Transverse colon (tissue), 4 donors: ENCODE measurements at regions of chr1 and their contacts with region 1.

Region 1: DNA sequence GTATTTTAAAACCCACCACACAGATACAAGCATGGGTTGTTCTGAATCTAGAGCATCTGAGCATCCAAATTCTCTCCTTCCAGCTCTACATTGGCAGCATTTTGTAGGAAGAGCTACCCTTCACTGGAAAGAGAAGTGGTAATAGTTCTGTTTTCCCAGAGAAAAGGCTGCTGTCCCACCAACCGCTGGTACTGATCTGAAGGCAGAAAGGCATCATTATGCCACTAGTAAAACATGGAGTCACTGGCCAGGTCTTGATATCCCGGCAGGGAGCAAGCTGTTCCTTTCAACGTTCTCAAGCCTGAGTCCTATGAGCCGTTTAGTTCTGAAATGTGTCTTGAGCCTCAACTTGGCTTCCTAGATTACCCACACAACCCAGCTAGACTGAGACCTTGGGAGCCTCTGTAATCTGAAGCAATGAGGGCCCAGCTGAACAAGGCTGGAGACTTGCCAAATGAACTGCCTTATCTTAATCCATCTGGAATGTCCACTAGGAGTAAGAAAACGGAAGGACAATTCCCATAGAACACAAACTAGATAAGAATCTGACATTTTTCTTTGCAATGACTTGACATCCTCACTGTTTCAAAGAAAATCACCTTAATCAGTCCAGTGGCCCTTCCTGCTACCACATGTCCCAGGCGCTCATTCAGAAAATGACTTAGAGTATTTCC is 116.7 kb downstream of the KCNH1 start:
- DNase-seq: no peak
- H3K4me3 ChIP-seq: no peak overlapping the region
- H3K27ac ChIP-seq: no peak overlapping the region
- H3K4me1 ChIP-seq: no peaks in the 10 kb centered on the region
- H3K27me3 ChIP-seq: no peaks in the 10 kb centered on the region
- CTCF ChIP-seq: no peak
- EP300 ChIP-seq: no peak
- POLR2A ChIP-seq: no peak

Region 2: GRCh38 chr1:209635850-209636249 is 1381.4 kb before region 1 on chr1:
- in situ Hi-C with region 1: no loop called
- intact Hi-C with region 1: loop called (anchors 5 kb)
- DNase-seq: no peak
- H3K4me3 ChIP-seq: no peak overlapping the region
- H3K27ac ChIP-seq: no peak overlapping the region
- H3K4me1 ChIP-seq: peaks cover 0 to 3% (median 0%) of the 10 kb centered on the region in 4 donors
- H3K27me3 ChIP-seq: no peaks in the 10 kb centered on the region
- CTCF ChIP-seq: no peak
- EP300 ChIP-seq: no peak
- POLR2A ChIP-seq: no peak

Region 3: DNA sequence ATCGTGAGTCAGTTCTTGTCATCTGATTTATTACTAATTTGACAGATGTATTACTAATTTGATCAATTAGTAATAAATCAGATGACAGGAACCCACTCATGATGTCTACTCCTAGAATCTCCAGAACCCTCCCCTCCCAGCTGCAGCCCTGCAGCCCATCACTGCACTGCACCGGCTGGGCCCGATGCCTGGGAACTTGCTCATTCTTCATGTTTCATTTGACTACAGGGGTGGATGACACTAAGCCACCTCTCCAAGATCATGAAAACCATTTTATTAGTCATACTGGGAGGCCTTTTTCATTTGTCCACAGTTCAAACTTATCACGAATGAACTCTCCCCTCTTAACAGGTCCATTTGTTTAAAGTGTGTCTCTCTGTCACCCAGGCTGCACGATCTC is 75.7 kb after region 1 on chr1:
- in situ Hi-C with region 1: no loop called
- intact Hi-C with region 1: no loop called
- DNase-seq: no peak
- H3K4me3 ChIP-seq: no peak overlapping the region
- H3K27ac ChIP-seq: no peak overlapping the region
- H3K4me1 ChIP-seq: no peaks in the 10 kb centered on the region
- H3K27me3 ChIP-seq: no peaks in the 10 kb centered on the region
- CTCF ChIP-seq: no peak
- EP300 ChIP-seq: no peak
- POLR2A ChIP-seq: no peak